Activated B cell treated with CpG ODN at 0.5 μM for 24 hours (primary cell): ENCODE measurements at regions of chr15 and their contacts with region 1.

Region 1: DNA sequence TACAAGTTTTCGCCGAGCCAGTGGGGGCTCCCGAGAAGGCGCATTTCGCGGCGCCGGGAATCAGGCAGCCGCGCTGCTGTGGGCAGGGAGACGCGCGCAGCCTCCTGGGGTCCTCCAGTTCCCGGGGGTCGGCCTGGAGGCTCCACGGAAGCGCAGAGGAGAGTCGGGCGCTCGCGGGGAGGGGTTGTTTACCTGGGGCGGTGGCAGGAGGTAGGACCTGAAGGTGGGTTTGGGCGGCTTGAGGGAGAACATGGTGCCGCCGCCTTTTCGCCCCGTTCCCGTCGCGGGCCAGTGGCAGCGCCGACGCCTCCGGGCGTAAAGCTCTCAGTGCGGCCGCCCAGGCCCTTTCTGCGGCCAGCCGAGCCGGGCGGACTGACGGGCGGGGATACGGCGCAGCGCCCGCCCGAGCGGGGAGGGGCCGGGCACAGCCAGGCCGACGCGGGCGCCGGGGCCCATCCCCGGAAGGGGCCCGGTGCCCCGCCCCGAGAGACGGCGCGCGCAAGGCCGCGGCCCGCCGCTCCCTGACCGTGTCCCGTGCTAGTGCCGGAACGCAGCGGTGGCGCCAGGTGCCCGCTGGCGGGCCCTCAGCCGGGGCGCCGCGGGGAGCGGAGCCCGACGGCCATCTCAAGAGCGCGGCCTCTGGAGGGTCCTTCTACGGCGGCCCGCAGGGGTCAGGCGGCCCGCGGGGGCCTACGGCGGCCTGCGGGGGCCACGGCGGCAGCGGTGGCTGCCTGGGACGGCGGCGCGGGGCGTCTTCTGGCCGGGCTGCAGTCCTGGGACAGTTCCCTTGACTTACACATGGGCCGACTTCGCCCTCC is at the start of gene MTMR10:
- DNase-seq: peak; percentile 89
- ATAC-seq: peak; percentile 92
- H3K4me3 Mint-ChIP-seq: peak within 1 kb of the TSS; percentile 94
- H3K27ac Mint-ChIP-seq: peak within 1 kb of the TSS; percentile 94
- H3K4me1 Mint-ChIP-seq: peaks cover 34% of the 10 kb centered on the region
- H3K27me3 Mint-ChIP-seq: no peaks in the 10 kb centered on the region
- CTCF ChIP-seq: no peak
- total RNA-seq, gene MTMR10: 39.3 and 42.5 TPM in 2 replicates

Region 2: DNA sequence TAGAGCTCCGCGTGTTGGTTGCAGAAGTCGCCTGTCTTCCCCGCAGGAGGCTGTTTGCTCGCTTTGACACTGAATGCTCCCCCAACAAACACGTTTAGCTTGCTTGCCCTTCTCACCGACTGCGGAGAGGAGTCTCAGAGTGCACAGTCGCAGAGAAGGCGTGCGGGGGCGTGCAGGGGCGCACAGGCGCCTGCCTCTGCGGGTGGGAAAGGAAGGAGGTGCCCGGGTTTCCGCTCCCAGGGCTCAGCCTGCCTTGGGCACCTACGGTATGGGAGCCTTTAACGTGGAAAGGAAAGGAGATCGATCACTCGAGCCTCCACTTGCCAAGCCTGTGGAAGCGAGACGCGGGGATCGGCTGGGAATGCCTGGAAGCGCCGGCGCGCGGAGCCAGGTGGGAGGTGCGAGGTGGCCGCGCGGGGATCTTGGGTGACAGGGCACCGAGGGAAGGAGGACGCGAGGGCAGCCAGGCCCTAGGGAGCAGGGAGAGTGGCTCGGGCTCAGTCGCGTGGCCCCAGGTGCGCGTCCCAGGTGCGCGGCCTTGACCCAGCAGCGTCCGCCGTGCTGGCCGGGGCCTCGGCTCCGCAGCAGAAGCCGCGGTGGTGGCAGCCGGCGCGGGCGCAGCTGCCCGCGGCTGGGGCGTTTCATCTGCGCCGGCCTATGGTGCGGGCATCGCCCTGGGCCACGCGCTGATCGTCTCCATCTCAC is 87.8 kb before region 1 on chr15 and contains the start of gene FAN1:
- CTCF ChIA-PET with region 1: no interaction called
- POLR2A ChIA-PET with region 1: no interaction called
- intact Hi-C with region 1: loop called (anchors 5 kb)
- DNase-seq: peak; percentile 69
- ATAC-seq: peak; percentile 86
- H3K4me3 Mint-ChIP-seq: peak within 1 kb of the TSS; percentile 98
- H3K27ac Mint-ChIP-seq: peak within 1 kb of the TSS; percentile 82
- H3K4me1 Mint-ChIP-seq: peaks cover 31% of the 10 kb centered on the region
- H3K27me3 Mint-ChIP-seq: no peaks in the 10 kb centered on the region
- CTCF ChIP-seq: no peak
- total RNA-seq, gene FAN1: 16.2 and 20.8 TPM in 2 replicates

Region 3: GRCh38 chr15:31004220-31004733 is 12.8 kb after region 1 on chr15:
- CTCF ChIA-PET with region 1: no interaction called
- POLR2A ChIA-PET with region 1: interaction called, 26 read pairs
- intact Hi-C with region 1: loop called (anchors 1 kb)
- DNase-seq: peak; percentile 36
- ATAC-seq: peak; percentile 90
- H3K4me3 Mint-ChIP-seq: peak overlapping the region; percentile 81
- H3K27ac Mint-ChIP-seq: peak overlapping the region; percentile 68
- H3K4me1 Mint-ChIP-seq: peaks cover 89% of the 10 kb centered on the region
- H3K27me3 Mint-ChIP-seq: no peaks in the 10 kb centered on the region
- CTCF ChIP-seq: no peak

Region 4: GRCh38 chr15:31031471-31032067 is 40.1 kb after region 1 on chr15:
- CTCF ChIA-PET with region 1: no interaction called
- POLR2A ChIA-PET with region 1: interaction called, 3 read pairs
- intact Hi-C with region 1: loop called (anchors 5 kb)
- DNase-seq: no peak
- ATAC-seq: peak; percentile 50
- H3K4me3 Mint-ChIP-seq: no peak overlapping the region
- H3K27ac Mint-ChIP-seq: peak overlapping the region; percentile 62
- H3K4me1 Mint-ChIP-seq: peaks cover 53% of the 10 kb centered on the region
- H3K27me3 Mint-ChIP-seq: peaks cover 2% of the 10 kb centered on the region
- CTCF ChIP-seq: no peak

Region 5: DNA sequence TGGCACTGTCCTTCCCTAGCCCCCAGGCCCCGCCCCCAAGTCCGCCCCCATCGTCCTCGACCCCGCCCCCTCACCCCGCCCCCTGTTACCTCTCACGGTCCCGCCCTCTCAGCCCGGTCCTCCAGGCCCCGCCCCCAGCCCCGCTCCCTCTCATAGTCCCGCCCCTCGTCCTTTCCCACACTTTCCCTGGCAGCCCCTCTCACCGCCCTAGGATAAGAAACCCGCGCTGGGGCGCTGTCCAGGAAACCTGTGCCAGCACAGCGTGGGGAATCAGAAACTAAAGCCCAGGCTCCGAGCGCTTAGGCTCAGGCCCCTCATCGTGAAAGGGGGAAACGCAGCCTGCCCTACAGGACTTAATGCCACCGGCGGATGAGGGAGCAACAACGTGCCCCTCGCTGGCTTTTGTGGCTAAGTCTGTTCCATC is 89.1 kb after region 1 on chr15:
- CTCF ChIA-PET with region 1: no interaction called
- POLR2A ChIA-PET with region 1: no interaction called
- intact Hi-C with region 1: loop called (anchors 1 kb)
- DNase-seq: peak; percentile 42
- ATAC-seq: peak; percentile 90
- H3K4me3 Mint-ChIP-seq: peak overlapping the region; percentile 83
- H3K27ac Mint-ChIP-seq: no peak overlapping the region
- H3K4me1 Mint-ChIP-seq: peaks cover 49% of the 10 kb centered on the region
- H3K27me3 Mint-ChIP-seq: no peaks in the 10 kb centered on the region
- CTCF ChIP-seq: no peak

Region 6: DNA sequence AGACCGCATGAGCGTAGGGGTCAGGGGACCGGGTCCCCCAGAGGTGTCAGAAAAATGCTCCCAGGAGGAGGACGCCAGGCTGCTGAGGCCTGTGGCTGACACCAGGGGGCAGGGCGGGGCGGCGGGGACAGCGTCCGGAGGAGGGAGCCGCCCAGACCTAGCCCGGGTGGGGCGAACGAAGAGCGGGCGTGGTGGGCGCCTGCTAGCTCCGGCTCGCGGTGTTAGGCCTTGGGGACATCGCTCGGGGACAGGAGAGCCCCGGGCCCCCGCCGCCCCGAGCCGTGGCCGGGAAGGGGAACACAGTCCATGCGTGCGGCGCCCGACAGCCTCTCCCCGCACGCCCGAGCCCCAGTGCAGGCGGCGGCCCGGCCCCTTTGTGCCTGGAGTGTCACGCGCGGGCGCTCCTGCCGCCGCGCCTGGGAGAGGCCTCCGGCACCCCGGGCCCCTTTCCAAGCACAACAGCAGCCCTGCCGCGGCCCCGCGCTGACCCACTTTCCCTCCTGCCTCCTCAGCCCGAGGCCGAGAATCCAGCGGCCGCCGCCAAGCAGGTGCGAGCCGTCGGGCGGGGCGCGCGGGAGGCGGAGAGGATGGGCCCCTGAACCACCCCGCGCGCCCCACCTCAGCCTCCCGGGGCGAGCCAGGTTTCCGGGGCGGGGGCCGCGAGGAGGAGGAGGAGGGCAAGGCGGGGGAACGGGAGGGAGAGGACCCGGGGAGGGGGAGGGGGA is 224.2 kb after region 1 on chr15:
- CTCF ChIA-PET with region 1: no interaction called
- POLR2A ChIA-PET with region 1: no interaction called
- intact Hi-C with region 1: loop called (anchors 5 kb)
- DNase-seq: peak; percentile 86
- ATAC-seq: peak; percentile 80
- H3K4me3 Mint-ChIP-seq: peak overlapping the region; percentile 88
- H3K27ac Mint-ChIP-seq: peak overlapping the region; percentile 93
- H3K4me1 Mint-ChIP-seq: peaks cover 44% of the 10 kb centered on the region
- H3K27me3 Mint-ChIP-seq: no peaks in the 10 kb centered on the region
- CTCF ChIP-seq: no peak